GM12878 (cell line): ENCODE measurements at regions of chrX and their contacts with region 1.

Region 1: DNA sequence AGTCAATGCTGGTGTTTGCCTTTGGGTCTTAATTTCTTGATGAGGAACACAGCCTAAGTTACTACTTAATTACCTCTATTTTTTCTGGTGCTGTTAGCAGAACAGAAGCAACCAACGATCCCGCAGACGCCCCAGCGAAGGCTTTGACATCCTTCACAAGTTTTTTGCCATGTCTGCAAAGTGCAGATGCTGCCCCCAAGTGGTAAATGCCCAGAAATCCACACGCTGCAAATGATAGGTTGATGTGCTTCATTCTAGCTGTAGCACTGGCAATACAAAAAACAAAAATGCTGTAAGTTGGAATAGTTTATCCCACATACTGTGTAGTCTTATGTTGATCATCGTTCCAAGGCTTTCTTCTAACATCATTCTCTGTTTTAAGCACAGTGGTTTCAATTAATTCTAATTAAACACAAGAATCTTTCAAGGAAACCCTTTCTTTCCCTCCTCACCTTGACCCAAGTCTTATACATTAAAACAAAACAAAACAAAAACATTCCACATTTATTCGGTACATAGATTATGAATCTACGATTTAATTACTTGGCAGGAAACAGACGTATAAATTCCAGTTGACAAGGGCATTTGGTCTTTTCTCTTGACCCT is 1.2 kb downstream of the PNPLA4 start:
- DNase-seq: peak; percentile 51
- ATAC-seq: peak; percentile 59
- H3K4me3 ChIP-seq: peak overlapping the region; percentile 67; the same call in 1 of the 2 replicates
- H3K27ac ChIP-seq: no peak overlapping the region; the same call in 1 of the 2 replicates
- H3K4me1 ChIP-seq: peaks cover 7% of the 10 kb centered on the region
- H3K27me3 ChIP-seq: no peaks in the 10 kb centered on the region
- CTCF ChIP-seq: peak; percentile 87 to 95 (median 91); a peak in 5 of 6 replicates
- EP300 ChIP-seq: no peak
- POLR2A ChIP-seq: no peak
- RAD21 ChIP-seq: peak; percentile 88

Region 2: GRCh38 chrX:6021316-6022091 is 1904.5 kb before region 1 on chrX:
- CTCF ChIA-PET with region 1: interaction called, 4 read pairs
- POLR2A ChIA-PET with region 1: no interaction called
- RAD21 ChIA-PET with region 1: no interaction called
- SMC1A ChIA-PET with region 1: no interaction called
- in situ Hi-C with region 1: loop called (anchors 5 kb)
- intact Hi-C with region 1: loop called (anchors 2 kb)
- DNase-seq: no peak
- ATAC-seq: peak; percentile 69
- H3K4me3 ChIP-seq: no peak overlapping the region
- H3K27ac ChIP-seq: no peak overlapping the region
- H3K4me1 ChIP-seq: no peaks in the 10 kb centered on the region
- H3K27me3 ChIP-seq: no peaks in the 10 kb centered on the region
- CTCF ChIP-seq: peak; percentile 69 to 79 (median 79)
- EP300 ChIP-seq: no peak
- POLR2A ChIP-seq: no peak
- RAD21 ChIP-seq: peak; percentile 95

Region 3: DNA sequence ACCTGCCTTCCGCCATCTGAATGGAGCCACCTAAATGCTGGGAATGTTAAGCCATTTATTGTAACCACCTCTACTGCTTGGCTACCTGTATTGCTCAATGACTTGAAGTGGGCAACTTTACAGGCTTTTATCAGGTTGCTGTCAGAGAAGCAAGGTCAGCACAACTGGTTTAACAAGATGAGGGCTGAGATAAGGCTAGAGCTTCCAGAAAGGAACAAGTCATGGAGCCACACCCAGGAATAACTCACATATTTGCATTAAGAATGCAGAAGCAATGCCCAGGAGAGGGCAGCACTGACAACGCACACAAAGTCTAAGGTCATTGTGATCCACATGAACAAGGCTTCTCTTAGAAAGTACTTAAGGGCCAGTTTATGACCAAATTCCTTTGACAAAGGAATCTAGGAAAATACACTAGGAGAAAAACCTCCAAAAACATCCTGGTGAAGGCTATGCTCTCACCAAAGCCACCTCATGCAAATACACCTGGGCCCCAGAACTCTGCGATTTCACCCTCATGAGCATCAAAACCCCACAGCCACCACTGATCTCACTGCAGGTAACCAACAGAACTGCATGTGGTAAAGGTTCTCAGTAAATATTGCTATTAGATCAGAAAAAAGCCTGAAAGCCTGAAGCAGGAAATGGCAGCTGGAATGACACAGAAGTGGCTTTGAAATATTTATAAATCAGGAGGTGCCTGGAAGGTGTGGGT is 793.5 kb before region 1 on chrX:
- CTCF ChIA-PET with region 1: interaction called, 7 read pairs
- POLR2A ChIA-PET with region 1: no interaction called
- RAD21 ChIA-PET with region 1: no interaction called
- SMC1A ChIA-PET with region 1: interaction called, 4 read pairs
- in situ Hi-C with region 1: loop called (anchors 5 kb)
- intact Hi-C with region 1: no loop called
- DNase-seq: no peak
- ATAC-seq: peak; percentile 93
- H3K4me3 ChIP-seq: no peak overlapping the region
- H3K27ac ChIP-seq: peak overlapping the region; percentile 30
- H3K4me1 ChIP-seq: peaks cover 12% of the 10 kb centered on the region
- H3K27me3 ChIP-seq: no peaks in the 10 kb centered on the region
- CTCF ChIP-seq: peak; percentile 55 to 60 (median 56)
- EP300 ChIP-seq: no peak
- POLR2A ChIP-seq: no peak
- RAD21 ChIP-seq: peak; percentile 66

Region 4: DNA sequence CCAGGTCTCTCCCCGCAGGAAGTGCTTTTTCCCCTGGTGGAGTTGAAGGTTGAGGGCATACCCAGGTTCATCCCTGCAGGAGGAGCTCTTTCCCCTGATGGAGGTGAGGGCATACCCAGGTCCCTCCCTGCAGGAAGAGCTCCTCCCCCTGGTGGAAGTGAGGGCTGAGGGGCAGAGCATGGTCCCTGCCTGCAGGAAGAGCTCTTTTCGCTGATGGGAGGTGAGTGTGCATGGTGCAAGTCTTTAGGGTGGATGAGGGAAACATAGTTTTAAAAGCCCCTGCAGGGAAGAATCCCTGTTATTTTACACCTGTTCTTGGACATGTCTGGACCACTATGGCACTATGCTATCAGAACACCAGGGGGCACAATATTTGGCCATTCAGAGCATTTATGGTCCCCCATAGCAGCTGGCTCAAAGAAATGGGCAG is 734.3 kb before region 1 on chrX:
- CTCF ChIA-PET with region 1: interaction called, 27 read pairs
- POLR2A ChIA-PET with region 1: interaction called, 3 read pairs
- RAD21 ChIA-PET with region 1: interaction called, 9 read pairs
- SMC1A ChIA-PET with region 1: interaction called, 6 read pairs
- in situ Hi-C with region 1: no loop called
- intact Hi-C with region 1: no loop called
- DNase-seq: no peak
- ATAC-seq: peak; percentile 81
- H3K4me3 ChIP-seq: no peak overlapping the region
- H3K27ac ChIP-seq: no peak overlapping the region
- H3K4me1 ChIP-seq: no peaks in the 10 kb centered on the region
- H3K27me3 ChIP-seq: no peaks in the 10 kb centered on the region
- CTCF ChIP-seq: peak; percentile 19 to 41 (median 29); a peak in 4 of 6 replicates
- EP300 ChIP-seq: no peak
- POLR2A ChIP-seq: no peak
- RAD21 ChIP-seq: peak; percentile 53

Region 5: DNA sequence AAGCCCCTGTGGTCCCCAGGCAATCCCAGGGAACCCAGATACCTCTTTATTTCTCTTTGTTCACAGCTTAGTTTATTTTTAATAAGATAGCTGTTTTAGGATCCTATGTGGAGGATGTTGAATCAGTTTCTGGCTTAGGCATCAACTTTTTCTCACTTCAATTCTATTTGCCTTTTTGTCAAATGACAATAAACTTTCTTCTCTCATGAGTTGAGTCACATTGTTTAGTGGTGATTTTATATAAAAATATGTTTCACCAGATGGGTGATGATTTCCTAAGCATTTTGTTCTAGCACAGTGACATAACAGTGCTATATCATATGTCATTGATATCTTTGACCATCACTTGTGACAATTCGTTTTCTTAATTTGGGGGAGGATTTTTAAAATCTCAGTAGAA is 579.9 kb before region 1 on chrX:
- CTCF ChIA-PET with region 1: no interaction called
- POLR2A ChIA-PET with region 1: no interaction called
- RAD21 ChIA-PET with region 1: no interaction called
- SMC1A ChIA-PET with region 1: no interaction called
- in situ Hi-C with region 1: no loop called
- intact Hi-C with region 1: loop called (anchors 10 kb)
- DNase-seq: no peak
- ATAC-seq: no peak
- H3K4me3 ChIP-seq: no peak overlapping the region
- H3K27ac ChIP-seq: no peak overlapping the region
- H3K4me1 ChIP-seq: no peaks in the 10 kb centered on the region
- H3K27me3 ChIP-seq: no peaks in the 10 kb centered on the region
- CTCF ChIP-seq: no peak
- EP300 ChIP-seq: no peak
- POLR2A ChIP-seq: no peak
- RAD21 ChIP-seq: no peak

Region 6: DNA sequence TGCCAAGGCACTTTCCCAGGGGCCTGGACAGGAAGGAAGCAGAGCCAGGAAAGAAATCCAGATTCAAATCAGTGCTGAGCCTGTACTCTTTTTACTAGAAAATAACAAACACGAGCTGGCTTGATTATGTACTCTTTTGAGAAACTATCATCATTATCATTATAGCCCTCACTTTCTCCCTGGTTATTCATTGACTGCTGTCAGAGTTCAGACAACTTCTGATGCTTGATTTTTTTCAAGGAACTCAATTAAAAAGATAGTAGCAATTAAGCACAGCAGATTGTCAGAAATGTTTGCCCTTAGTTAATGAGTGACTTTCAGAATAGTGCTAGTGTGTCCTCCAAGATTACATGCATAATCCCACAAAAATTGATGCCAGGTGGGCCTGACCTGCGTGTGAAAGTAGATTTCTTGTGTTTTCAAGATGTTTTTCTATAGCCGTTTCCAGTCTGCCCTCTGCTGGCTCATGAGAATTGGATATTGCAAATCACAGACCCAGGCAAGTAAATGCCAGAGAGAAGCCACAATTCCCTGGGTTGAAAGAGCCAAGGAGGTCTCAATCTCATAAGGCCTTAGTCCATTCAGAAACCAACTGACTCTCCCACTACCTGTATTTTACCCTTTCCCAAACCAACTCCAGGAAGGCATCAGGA is 15.5 kb after region 1 on chrX:
- CTCF ChIA-PET with region 1: interaction called, 23 read pairs
- POLR2A ChIA-PET with region 1: no interaction called
- RAD21 ChIA-PET with region 1: interaction called, 3 read pairs
- SMC1A ChIA-PET with region 1: interaction called, 12 read pairs
- in situ Hi-C with region 1: no loop called
- intact Hi-C with region 1: no loop called
- DNase-seq: no peak
- ATAC-seq: peak; percentile 79
- H3K4me3 ChIP-seq: no peak overlapping the region
- H3K27ac ChIP-seq: no peak overlapping the region
- H3K4me1 ChIP-seq: 0 out of 2 replicates have a peak, but pooled peaks cover 3% of the 10 kb centered on the region
- H3K27me3 ChIP-seq: no peaks in the 10 kb centered on the region
- CTCF ChIP-seq: peak; percentile 50 to 62 (median 57); a peak in 5 of 6 replicates
- EP300 ChIP-seq: no peak
- POLR2A ChIP-seq: no peak
- RAD21 ChIP-seq: peak; percentile 54